HCT116 (cell line): ENCODE measurements at regions of chr1 and their contacts with region 1.

Region 1: GRCh38 chr1:109099938-109100773 is 9.6 kb downstream of the TMEM167B start:
- DNase-seq: peak; percentile 97
- ATAC-seq: peak; percentile 90
- H3K4me3 ChIP-seq: peak overlapping the region; percentile 91 to 95
- H3K27ac ChIP-seq: peak overlapping the region; percentile 94
- H3K4me1 ChIP-seq: peaks cover 0 to 10% of the 10 kb centered on the region in 2 experiments; a peak in 2 of 4 replicates
- H3K27me3 ChIP-seq: no peaks in the 10 kb centered on the region
- CTCF ChIP-seq: peak; percentile 70 to 85 (median 79)
- POLR2A ChIP-seq: peak; percentile 99
- RAD21 ChIP-seq: peak; percentile 55

Region 2: GRCh38 chr1:109041621-109042468 is 58.3 kb before region 1 on chr1 and contains the start of gene WDR47:
- CTCF ChIA-PET with region 1: interaction called, 4 read pairs
- POLR2A ChIA-PET with region 1: interaction called, 12 read pairs
- RAD21 ChIA-PET with region 1: no interaction called
- intact Hi-C with region 1: no loop called
- DNase-seq: peak; percentile 90
- ATAC-seq: peak; percentile 98
- H3K4me3 ChIP-seq: peak within 1 kb of the TSS; percentile 87 to 97
- H3K27ac ChIP-seq: peak within 1 kb of the TSS; percentile 64
- H3K4me1 ChIP-seq: peaks cover 3 to 15% of the 10 kb centered on the region in 2 experiments; a peak in 3 of 4 replicates
- H3K27me3 ChIP-seq: no peaks in the 10 kb centered on the region
- CTCF ChIP-seq: no peak
- POLR2A ChIP-seq: peak; percentile 85
- RAD21 ChIP-seq: no peak
- total RNA-seq, gene WDR47: 9.3 TPM

Region 3: GRCh38 chr1:109075531-109076490 is 24.3 kb before region 1 on chr1 and contains the start of gene TAF13:
- CTCF ChIA-PET with region 1: interaction called, 4 read pairs
- POLR2A ChIA-PET with region 1: interaction called, 11 read pairs
- RAD21 ChIA-PET with region 1: interaction called in 1 of 2 experiments, 3 read pairs
- intact Hi-C with region 1: loop called (anchors 1 kb)
- DNase-seq: peak; percentile 88
- ATAC-seq: peak; percentile 95
- H3K4me3 ChIP-seq: peak within 1 kb of the TSS; percentile 65 to 83
- H3K27ac ChIP-seq: peak within 1 kb of the TSS; percentile 70
- H3K4me1 ChIP-seq: peaks cover 21 to 29% of the 10 kb centered on the region in 2 experiments
- H3K27me3 ChIP-seq: no peaks in the 10 kb centered on the region
- CTCF ChIP-seq: no peak
- POLR2A ChIP-seq: peak; percentile 92
- RAD21 ChIP-seq: no peak
- total RNA-seq, gene TAF13: 27.3 TPM

Region 4: DNA sequence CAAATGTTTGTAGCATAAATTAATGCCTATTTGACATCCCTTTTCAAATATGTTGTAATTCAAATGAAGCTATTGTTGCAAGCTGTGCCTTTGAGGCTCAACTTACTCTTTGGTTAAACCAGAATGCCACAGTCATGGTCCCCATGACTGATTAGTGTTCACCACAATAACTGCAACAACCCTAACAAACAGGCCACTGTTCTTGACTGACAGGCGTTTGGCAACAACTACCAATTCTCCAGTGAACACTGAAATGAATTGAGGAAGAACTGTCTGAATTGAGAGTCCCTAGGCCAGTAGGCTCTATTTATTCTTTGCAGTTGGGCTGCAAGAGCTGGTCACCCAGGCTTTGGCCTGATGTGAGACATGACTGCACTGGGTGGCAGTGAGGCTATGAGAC is 16.2 kb before region 1 on chr1:
- CTCF ChIA-PET with region 1: interaction called, 8 read pairs
- POLR2A ChIA-PET with region 1: interaction called, 11 read pairs
- RAD21 ChIA-PET with region 1: no interaction called
- intact Hi-C with region 1: no loop called
- DNase-seq: no peak
- ATAC-seq: no peak
- H3K4me3 ChIP-seq: no peak overlapping the region
- H3K27ac ChIP-seq: no peak overlapping the region
- H3K4me1 ChIP-seq: peaks cover 12 to 15% of the 10 kb centered on the region in 2 experiments
- H3K27me3 ChIP-seq: no peaks in the 10 kb centered on the region
- CTCF ChIP-seq: no peak
- POLR2A ChIP-seq: no peak
- RAD21 ChIP-seq: no peak

Region 5: GRCh38 chr1:109112652-109113285 is 12.6 kb after region 1 on chr1:
- CTCF ChIA-PET with region 1: interaction called, 18 read pairs
- POLR2A ChIA-PET with region 1: interaction called, 21 read pairs
- RAD21 ChIA-PET with region 1: interaction called in 1 of 2 experiments, 3 read pairs
- intact Hi-C with region 1: no loop called
- DNase-seq: peak; percentile 80
- ATAC-seq: peak; percentile 97
- H3K4me3 ChIP-seq: no peak overlapping the region
- H3K27ac ChIP-seq: no peak overlapping the region
- H3K4me1 ChIP-seq: peaks cover 3 to 16% of the 10 kb centered on the region in 2 experiments; a peak in 3 of 4 replicates
- H3K27me3 ChIP-seq: no peaks in the 10 kb centered on the region
- CTCF ChIP-seq: peak; percentile 79 to 96 (median 96)
- POLR2A ChIP-seq: no peak
- RAD21 ChIP-seq: peak; percentile 82

Region 6: DNA sequence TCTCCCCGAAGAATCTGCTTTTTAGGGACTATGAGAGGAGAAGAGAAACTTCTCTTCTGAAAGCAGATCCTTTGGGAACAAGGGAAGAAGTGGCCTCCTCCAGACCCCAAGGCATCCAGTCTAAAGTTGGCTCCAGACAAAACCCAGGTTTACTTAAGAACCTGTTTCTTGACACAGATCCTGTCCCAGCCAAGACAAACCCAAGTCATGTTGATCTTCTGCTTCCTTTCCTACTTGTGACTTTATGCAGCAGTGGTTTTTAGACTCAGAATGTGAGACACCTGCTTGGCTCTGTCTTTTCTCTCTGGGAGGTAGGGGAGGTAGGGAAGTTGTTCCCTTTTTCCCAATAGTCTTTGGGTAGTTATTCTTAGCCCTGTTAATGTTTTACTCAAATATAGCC is 52.0 kb after region 1 on chr1:
- CTCF ChIA-PET with region 1: no interaction called
- POLR2A ChIA-PET with region 1: no interaction called
- RAD21 ChIA-PET with region 1: no interaction called
- intact Hi-C with region 1: no loop called
- DNase-seq: no peak
- ATAC-seq: no peak
- H3K4me3 ChIP-seq: no peak overlapping the region
- H3K27ac ChIP-seq: no peak overlapping the region
- H3K4me1 ChIP-seq: peaks cover 0 to 7% of the 10 kb centered on the region in 2 experiments; a peak in 1 of 4 replicates
- H3K27me3 ChIP-seq: no peaks in the 10 kb centered on the region
- CTCF ChIP-seq: no peak
- POLR2A ChIP-seq: no peak
- RAD21 ChIP-seq: no peak

Region 7: DNA sequence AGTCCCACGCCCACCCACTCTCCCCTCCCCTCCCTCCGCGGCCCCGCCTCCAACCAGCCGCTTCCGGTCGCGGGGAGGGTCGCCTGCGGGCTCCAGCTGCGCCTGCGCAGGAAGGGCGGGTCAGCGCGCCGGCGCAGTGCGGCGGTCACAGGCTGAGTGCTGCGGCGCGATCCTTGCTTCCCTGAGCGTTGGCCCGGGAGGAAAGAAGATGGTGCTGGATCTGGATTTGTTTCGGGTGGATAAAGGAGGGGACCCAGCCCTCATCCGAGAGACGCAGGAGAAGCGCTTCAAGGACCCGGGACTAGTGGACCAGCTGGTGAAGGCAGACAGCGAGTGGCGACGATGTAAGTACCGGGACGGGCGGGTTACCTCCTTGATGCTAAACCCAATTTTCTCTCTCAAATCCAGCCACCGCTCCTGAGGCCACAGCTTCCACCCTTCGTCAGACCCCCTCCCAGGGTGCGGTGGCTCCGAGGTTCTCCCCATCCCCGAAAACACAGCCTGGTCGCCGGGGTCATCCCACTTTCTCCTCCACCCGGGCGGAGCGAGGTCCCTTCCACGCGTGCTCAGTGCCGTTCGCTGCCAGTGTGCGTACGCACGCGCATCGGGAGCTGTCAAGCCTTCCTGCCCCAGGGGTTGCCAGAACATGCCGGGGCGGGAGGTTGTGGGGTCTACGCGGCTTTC is 113.8 kb after region 1 on chr1 and contains the start of gene SARS1:
- CTCF ChIA-PET with region 1: interaction called, 3 read pairs
- POLR2A ChIA-PET with region 1: interaction called, 10 read pairs
- RAD21 ChIA-PET with region 1: no interaction called
- intact Hi-C with region 1: no loop called
- DNase-seq: peak; percentile 57
- ATAC-seq: peak; percentile 93
- H3K4me3 ChIP-seq: peak within 1 kb of the TSS; percentile 88 to 96
- H3K27ac ChIP-seq: peak within 1 kb of the TSS; percentile 72
- H3K4me1 ChIP-seq: peaks cover 9 to 31% of the 10 kb centered on the region in 2 experiments
- H3K27me3 ChIP-seq: no peaks in the 10 kb centered on the region
- CTCF ChIP-seq: no peak
- POLR2A ChIP-seq: no peak
- RAD21 ChIP-seq: no peak
- total RNA-seq, gene SARS1: 206 TPM

Region 8: GRCh38 chr1:109226078-109226445 is 125.9 kb after region 1 on chr1:
- CTCF ChIA-PET with region 1: no interaction called
- POLR2A ChIA-PET with region 1: no interaction called
- RAD21 ChIA-PET with region 1: no interaction called
- intact Hi-C with region 1: no loop called
- DNase-seq: no peak
- ATAC-seq: no peak
- H3K4me3 ChIP-seq: no peak overlapping the region
- H3K27ac ChIP-seq: no peak overlapping the region
- H3K4me1 ChIP-seq: peaks cover 0 to 9% of the 10 kb centered on the region in 2 experiments; a peak in 1 of 4 replicates
- H3K27me3 ChIP-seq: no peaks in the 10 kb centered on the region
- CTCF ChIP-seq: no peak
- POLR2A ChIP-seq: no peak
- RAD21 ChIP-seq: no peak

Region 9: GRCh38 chr1:109263597-109264398 is 163.6 kb after region 1 on chr1:
- CTCF ChIA-PET with region 1: no interaction called
- POLR2A ChIA-PET with region 1: no interaction called
- RAD21 ChIA-PET with region 1: no interaction called
- intact Hi-C with region 1: loop called (anchors 2 kb)
- DNase-seq: peak; percentile 88
- ATAC-seq: peak; percentile 96
- H3K4me3 ChIP-seq: no peak overlapping the region
- H3K27ac ChIP-seq: peak overlapping the region; percentile 2; the same call in 1 of the 2 replicates
- H3K4me1 ChIP-seq: peaks cover 0 to 9% of the 10 kb centered on the region in 2 experiments; a peak in 2 of 4 replicates
- H3K27me3 ChIP-seq: no peaks in the 10 kb centered on the region
- CTCF ChIP-seq: peak; percentile 99 to 100 (median 99)
- POLR2A ChIP-seq: no peak
- RAD21 ChIP-seq: peak; percentile 96